ENCODE measurements at regions of chr5 and their contacts with region 1.

Region 1: DNA sequence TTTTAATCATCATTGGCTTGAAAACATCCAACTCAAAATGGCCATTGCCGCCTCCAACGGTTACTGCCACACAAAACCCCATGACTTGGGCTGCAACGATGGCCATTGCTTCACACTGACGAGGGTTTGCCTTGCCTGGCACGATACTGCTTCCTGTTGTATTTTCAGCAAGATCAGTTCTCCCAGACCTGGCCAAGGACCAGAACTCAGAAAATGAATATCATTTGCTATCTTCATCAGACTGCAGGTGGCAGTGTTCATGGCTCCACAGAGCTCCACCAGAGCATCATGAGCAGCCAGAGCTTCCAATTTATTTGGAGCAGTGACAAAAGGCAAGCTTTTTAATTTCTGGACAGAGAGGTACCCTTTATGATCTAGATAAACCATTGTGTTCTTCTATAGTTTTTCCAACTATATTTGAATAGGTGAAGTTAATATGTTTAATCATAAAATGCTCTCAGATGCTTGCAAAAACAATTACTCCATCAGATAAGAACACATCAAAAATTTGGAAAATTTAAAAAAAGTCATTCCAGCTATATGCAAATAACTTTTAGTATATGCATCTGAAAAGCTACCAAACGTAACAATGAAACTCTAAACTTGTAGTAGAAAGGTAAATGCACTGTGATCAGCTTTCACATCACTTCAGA is 10.4 kb downstream of the AMACR start:
- DNase-seq: peak; percentile 55 to 61
- H3K4me3 ChIP-seq: no peak overlapping the region
- H3K27ac ChIP-seq: no peak overlapping the region
- H3K4me1 ChIP-seq: no peaks in the 10 kb centered on the region
- H3K27me3 ChIP-seq: no peaks in the 10 kb centered on the region
- CTCF ChIP-seq: peak; percentile 84

Region 2: GRCh38 chr5:33338336-33339113 is 658.9 kb before region 1 on chr5:
- CTCF ChIA-PET with region 1: interaction called, 10 read pairs
- POLR2A ChIA-PET with region 1: no interaction called
- intact Hi-C with region 1: no loop called
- DNase-seq: no peak
- H3K4me3 ChIP-seq: no peak overlapping the region
- H3K27ac ChIP-seq: no peak overlapping the region
- H3K4me1 ChIP-seq: 0 out of 2 replicates have a peak, but pooled peaks cover 2% of the 10 kb centered on the region
- H3K27me3 ChIP-seq: no peaks in the 10 kb centered on the region
- CTCF ChIP-seq: no peak

Region 3: GRCh38 chr5:33978307-33978706 is 19.1 kb before region 1 on chr5:
- CTCF ChIA-PET with region 1: no interaction called
- POLR2A ChIA-PET with region 1: no interaction called
- intact Hi-C with region 1: no loop called
- DNase-seq: no peak
- H3K4me3 ChIP-seq: no peak overlapping the region
- H3K27ac ChIP-seq: no peak overlapping the region
- H3K4me1 ChIP-seq: no peaks in the 10 kb centered on the region
- H3K27me3 ChIP-seq: no peaks in the 10 kb centered on the region
- CTCF ChIP-seq: no peak

Region 4: DNA sequence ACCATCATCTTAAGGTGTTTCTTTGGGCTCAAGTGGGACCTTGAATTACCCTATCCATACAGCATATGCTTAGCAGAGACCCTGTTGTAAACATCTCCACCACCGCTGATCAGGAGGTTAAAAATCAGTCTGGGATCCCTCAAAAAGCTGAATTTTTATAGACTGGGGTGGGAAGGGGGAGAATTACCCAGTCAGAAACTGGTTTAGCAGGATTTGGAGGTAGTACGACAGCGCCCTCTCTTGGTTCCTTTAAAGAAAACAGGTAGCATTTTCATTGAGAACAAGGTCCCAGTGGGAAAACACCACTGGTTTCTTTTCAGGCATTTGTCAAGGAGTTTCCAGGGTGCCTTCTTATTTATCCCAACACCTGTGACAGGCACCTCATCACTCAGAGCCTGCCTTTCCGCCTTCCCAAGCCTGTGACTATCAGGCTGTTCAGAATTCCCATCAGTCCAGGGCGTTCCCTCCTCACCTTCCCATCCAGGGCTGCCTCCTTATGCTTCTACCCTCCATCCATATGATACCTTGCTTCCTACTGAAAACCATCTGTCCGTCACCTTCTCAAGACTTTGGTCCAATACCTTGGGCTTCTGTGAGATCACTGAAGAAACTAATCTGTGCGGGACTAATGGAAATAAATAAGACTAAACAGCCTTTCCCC is 454.8 kb after region 1 on chr5:
- CTCF ChIA-PET with region 1: no interaction called
- POLR2A ChIA-PET with region 1: no interaction called
- intact Hi-C with region 1: loop called (anchors 1 kb)
- DNase-seq: peak in 1 of 2 experiments; percentile 40
- H3K4me3 ChIP-seq: no peak overlapping the region
- H3K27ac ChIP-seq: no peak overlapping the region
- H3K4me1 ChIP-seq: 0 out of 2 replicates have a peak, but pooled peaks cover 4% of the 10 kb centered on the region
- H3K27me3 ChIP-seq: peaks cover 13% of the 10 kb centered on the region; the same call in 1 of the 2 replicates
- CTCF ChIP-seq: peak; percentile 82

Region 5: GRCh38 chr5:34464830-34465229 is 467.4 kb after region 1 on chr5:
- CTCF ChIA-PET with region 1: interaction called, 8 read pairs
- POLR2A ChIA-PET with region 1: no interaction called
- intact Hi-C with region 1: loop called (anchors 1 kb)
- DNase-seq: peak in 1 of 2 experiments; percentile 32
- H3K4me3 ChIP-seq: no peak overlapping the region; the same call in 1 of the 2 replicates
- H3K27ac ChIP-seq: no peak overlapping the region
- H3K4me1 ChIP-seq: peaks cover 6% of the 10 kb centered on the region; the same call in 1 of the 2 replicates
- H3K27me3 ChIP-seq: no peaks in the 10 kb centered on the region
- CTCF ChIP-seq: no peak